Activated T-helper 1 cell treated with anti-CD3 and anti-CD28 coated beads, Interleukin-12 subunit alpha, Interleukin-12 subunit beta, Interleukin-2, Interleukin-4 antibody, amounts not matched to agents 30 ng/mL and 10 ng/mL and 1 ng/mL, durations not matched to agents 14 hours and 24 hours and 36 hours (primary cell): ENCODE measurements at regions of chr4 and their contacts with region 1.

Region 1: DNA sequence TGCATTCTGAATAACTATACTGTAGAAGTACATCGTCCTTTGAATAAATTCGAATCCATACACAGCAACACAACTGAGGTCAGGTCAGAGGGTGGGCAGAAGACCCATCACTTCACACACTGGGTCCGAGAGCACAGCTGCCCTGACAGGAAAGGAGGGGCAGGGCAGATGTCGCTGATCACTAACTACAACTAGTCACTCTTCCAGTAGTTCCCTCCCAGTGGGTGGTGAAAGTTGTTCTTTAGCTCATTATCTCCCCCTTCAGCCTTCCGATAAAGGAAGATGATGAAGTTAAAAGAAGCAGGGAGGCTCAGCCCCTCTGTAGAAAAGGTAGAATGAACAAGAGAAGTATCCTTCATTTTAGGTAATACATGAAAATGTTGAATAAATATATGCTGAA is 278.9 kb downstream of the INPP4B start:
- DNase-seq: peak; percentile 51
- H3K4me3 Mint-ChIP-seq: peak overlapping the region; percentile 93
- H3K27ac Mint-ChIP-seq: peak overlapping the region; percentile 97
- H3K4me1 Mint-ChIP-seq: peaks cover 76% of the 10 kb centered on the region
- H3K27me3 Mint-ChIP-seq: no peaks in the 10 kb centered on the region

Region 2: GRCh38 chr4:141636082-141636770 is 931.0 kb before region 1 on chr4 and contains the start of gene IL15:
- intact Hi-C with region 1: loop called (anchors 5 kb)
- DNase-seq: peak; percentile 70
- H3K4me3 Mint-ChIP-seq: peak within 1 kb of the TSS; percentile 96
- H3K27ac Mint-ChIP-seq: peak within 1 kb of the TSS; percentile 81
- H3K4me1 Mint-ChIP-seq: peaks cover 25% of the 10 kb centered on the region
- H3K27me3 Mint-ChIP-seq: peaks cover 20% of the 10 kb centered on the region
- total RNA-seq, gene IL15: 0.67 and 1.8 TPM in 2 replicates

Region 3: GRCh38 chr4:142353149-142353738 is 214.0 kb before region 1 on chr4:
- intact Hi-C with region 1: loop called (anchors 1 kb)
- DNase-seq: no peak
- H3K4me3 Mint-ChIP-seq: peak overlapping the region; percentile 42
- H3K27ac Mint-ChIP-seq: no peak overlapping the region
- H3K4me1 Mint-ChIP-seq: peaks cover 78% of the 10 kb centered on the region
- H3K27me3 Mint-ChIP-seq: no peaks in the 10 kb centered on the region

Region 4: GRCh38 chr4:142416711-142417275 is 150.4 kb before region 1 on chr4:
- intact Hi-C with region 1: loop called (anchors 1 kb)
- DNase-seq: no peak
- H3K4me3 Mint-ChIP-seq: peak overlapping the region; percentile 50
- H3K27ac Mint-ChIP-seq: peak overlapping the region; percentile 91
- H3K4me1 Mint-ChIP-seq: peaks cover 33% of the 10 kb centered on the region
- H3K27me3 Mint-ChIP-seq: no peaks in the 10 kb centered on the region

Region 5: GRCh38 chr4:142435599-142436235 is 131.5 kb before region 1 on chr4:
- intact Hi-C with region 1: no loop called
- DNase-seq: no peak
- H3K4me3 Mint-ChIP-seq: no peak overlapping the region
- H3K27ac Mint-ChIP-seq: no peak overlapping the region
- H3K4me1 Mint-ChIP-seq: peaks cover 6% of the 10 kb centered on the region
- H3K27me3 Mint-ChIP-seq: no peaks in the 10 kb centered on the region

Region 6: GRCh38 chr4:142713282-142714030 is 146.3 kb after region 1 on chr4:
- intact Hi-C with region 1: loop called (anchors 2 kb)
- DNase-seq: no peak
- H3K4me3 Mint-ChIP-seq: peak overlapping the region; percentile 1
- H3K27ac Mint-ChIP-seq: peak overlapping the region; percentile 74
- H3K4me1 Mint-ChIP-seq: peaks cover 33% of the 10 kb centered on the region
- H3K27me3 Mint-ChIP-seq: no peaks in the 10 kb centered on the region

Region 7: DNA sequence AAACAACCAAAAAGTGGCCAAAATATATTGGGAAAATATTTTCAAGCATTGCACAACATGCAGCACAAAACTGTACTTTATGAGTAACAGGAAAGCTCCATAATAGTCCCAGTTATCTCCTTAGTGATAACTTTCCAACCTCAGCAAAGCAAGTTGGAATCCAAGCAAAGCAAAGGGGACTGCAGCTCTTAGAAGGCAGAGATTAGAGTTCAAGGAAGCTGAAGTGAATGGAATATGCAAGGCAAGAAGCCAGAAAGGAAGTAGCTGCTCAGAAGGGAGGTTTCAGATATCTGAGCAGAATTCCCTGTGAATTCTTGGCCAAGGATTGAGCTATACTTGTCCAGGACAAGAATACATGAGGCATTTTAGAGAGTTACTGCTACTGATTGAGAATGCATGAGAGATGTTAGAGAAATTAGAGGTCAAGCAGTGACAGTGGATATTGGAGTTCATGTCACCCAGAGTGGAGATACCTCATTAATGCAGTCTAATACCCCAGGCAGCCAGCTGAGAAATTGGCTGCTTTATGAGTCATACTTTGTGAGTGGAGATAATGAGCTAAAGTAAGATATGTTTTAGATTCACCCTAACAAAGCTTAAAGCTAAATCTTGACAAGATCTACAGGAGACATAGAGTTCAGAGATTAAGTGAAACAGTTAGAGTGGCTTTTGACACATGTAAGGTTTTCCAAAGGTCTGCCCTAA is 176.1 kb after region 1 on chr4:
- intact Hi-C with region 1: no loop called
- DNase-seq: no peak
- H3K4me3 Mint-ChIP-seq: no peak overlapping the region
- H3K27ac Mint-ChIP-seq: no peak overlapping the region
- H3K4me1 Mint-ChIP-seq: no peaks in the 10 kb centered on the region
- H3K27me3 Mint-ChIP-seq: no peaks in the 10 kb centered on the region

Region 8: DNA sequence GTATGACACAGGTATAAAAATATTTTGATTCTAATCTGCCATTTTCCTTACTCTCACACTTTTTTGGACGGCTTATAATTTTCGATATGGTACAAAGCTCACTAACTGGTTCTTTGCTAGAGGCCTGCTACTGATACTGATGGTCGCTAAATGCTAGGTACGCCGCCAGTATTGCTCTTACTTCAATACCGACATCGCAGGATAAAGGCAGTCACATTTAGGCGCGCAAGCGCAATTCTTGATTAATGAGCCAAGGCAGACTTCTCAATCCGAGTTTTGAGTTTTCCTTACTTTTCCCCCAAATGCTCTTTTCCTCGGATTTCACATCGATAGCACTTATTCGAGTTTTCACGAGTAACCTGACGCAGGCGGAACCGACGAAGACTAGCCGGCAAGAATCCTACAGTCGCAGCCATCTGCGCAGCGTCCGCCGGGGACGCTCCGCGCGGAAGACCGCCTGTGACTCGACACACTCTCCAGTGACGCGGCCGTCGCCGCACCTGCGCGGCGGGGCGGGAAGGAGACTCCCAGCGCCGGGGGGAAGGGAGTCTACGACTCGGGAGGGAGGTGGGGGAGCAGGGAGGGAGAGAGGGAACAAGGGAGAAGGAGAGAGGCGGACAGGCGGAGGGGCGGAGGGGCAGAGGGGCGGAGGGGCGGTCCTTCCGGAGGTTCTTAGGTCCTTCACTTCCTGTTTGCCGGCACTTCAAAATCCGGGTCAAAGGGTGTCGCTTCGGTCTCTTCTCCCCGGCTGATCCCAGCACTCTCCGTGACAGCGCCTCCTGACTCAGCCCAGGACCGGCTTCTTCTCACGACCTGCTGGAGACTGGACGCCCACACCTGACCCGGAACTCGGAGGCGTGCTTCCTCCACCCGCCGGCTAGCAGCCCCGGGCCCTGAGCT is 617.3 kb after region 1 on chr4 and contains the start of gene USP38:
- intact Hi-C with region 1: loop called (anchors 5 kb)
- DNase-seq: peak; percentile 80
- H3K4me3 Mint-ChIP-seq: peak within 1 kb of the TSS; percentile 92
- H3K27ac Mint-ChIP-seq: peak within 1 kb of the TSS; percentile 98
- H3K4me1 Mint-ChIP-seq: peaks cover 62% of the 10 kb centered on the region
- H3K27me3 Mint-ChIP-seq: no peaks in the 10 kb centered on the region
- total RNA-seq, gene USP38: 29.8 and 32.0 TPM in 2 replicates